Activated CD4-positive, alpha-beta T cell treated with anti-CD3 and anti-CD28 coated beads, Interleukin-2, amount 10 ng/mL, durations not matched to agents 24 days and 14 days (primary cell): ENCODE measurements at regions of chr3 and their contacts with region 1.

Region 1: DNA sequence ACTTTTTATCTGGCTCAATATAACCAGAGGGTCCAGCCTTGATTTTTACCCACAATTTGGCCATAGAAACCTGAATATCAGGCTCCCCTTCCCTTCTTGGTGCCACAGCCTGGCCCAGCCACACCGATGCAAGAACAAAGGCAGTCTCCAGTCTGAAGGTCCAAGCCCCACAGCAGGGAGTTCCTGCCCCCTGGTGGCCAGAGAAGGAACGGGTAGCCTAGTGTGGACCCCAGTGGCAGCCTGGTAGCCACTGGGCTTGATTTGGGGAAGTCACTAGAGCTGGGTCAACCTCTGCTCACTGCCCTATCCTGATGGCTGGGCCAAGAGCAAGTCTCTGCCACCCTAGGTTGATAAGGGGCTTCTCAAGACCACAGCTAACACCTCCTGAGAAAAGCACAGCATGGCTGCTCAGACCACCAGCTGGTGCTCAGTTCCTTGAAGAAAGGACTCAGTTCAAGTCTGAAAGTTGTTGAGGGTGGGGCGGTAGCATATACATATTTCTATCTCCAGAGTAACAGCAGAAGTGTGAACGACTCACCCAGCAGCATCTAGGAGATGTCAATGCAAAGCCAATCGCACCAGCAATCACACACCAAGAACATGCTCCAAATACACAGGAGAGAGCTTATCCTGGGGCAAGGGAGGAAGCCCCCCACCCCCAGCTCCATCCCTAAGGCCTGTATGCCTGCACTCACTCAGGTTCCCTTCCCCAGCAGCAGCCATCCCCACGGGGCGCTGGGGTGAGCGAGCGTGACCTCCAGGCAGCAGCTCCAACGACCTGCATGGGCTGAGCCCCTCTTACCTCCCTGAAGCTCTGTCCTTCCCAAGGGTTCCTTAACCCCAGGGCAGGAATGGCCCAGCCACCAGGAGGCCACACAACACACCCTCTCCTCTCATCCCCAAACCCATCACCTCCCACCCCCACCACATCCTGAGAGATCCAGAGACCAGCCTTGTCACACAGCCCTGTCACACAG is 7.6 kb downstream of the PFKFB4 start:
- DNase-seq: peak; percentile 95
- H3K4me3 Mint-ChIP-seq: no peak overlapping the region
- H3K27ac Mint-ChIP-seq: peak overlapping the region; percentile 37
- H3K4me1 Mint-ChIP-seq: peaks cover 24% of the 10 kb centered on the region
- H3K27me3 Mint-ChIP-seq: no peaks in the 10 kb centered on the region

Region 2: DNA sequence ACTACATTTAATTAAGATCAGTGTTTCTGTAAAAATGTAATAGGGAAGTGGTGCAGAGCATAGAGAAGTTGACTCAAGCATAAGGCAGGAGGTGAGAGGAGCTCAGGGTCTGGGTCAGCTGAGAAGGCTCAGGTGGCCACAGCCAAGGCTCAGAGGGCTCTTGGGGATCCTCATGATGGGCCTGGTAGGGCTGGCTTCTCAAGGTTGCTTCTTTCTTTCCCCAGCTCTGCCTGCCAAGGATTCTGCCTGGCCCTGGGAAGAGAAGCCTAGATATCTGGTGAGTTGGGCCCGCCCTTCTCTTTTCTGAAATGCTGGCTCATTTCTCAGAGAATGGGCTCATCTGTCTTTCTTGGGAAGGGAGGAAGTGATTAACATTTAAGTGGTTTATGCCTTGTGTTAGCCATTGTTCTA is 301.6 kb before region 1 on chr3:
- intact Hi-C with region 1: no loop called
- DNase-seq: peak; percentile 67
- H3K4me3 Mint-ChIP-seq: peak overlapping the region; percentile 45
- H3K27ac Mint-ChIP-seq: peak overlapping the region; percentile 85
- H3K4me1 Mint-ChIP-seq: peaks cover 33% of the 10 kb centered on the region
- H3K27me3 Mint-ChIP-seq: no peaks in the 10 kb centered on the region

Region 3: GRCh38 chr3:48273594-48274211 is 275.3 kb before region 1 on chr3:
- intact Hi-C with region 1: loop called (anchors 1 kb)
- DNase-seq: peak; percentile 88
- H3K4me3 Mint-ChIP-seq: no peak overlapping the region
- H3K27ac Mint-ChIP-seq: no peak overlapping the region
- H3K4me1 Mint-ChIP-seq: peaks cover 22% of the 10 kb centered on the region
- H3K27me3 Mint-ChIP-seq: no peaks in the 10 kb centered on the region

Region 4: GRCh38 chr3:48400824-48401433 is 148.1 kb before region 1 on chr3:
- intact Hi-C with region 1: loop called (anchors 1 kb)
- DNase-seq: peak; percentile 89
- H3K4me3 Mint-ChIP-seq: no peak overlapping the region
- H3K27ac Mint-ChIP-seq: peak overlapping the region; percentile 51
- H3K4me1 Mint-ChIP-seq: peaks cover 2% of the 10 kb centered on the region
- H3K27me3 Mint-ChIP-seq: peaks cover 4% of the 10 kb centered on the region

Region 5: DNA sequence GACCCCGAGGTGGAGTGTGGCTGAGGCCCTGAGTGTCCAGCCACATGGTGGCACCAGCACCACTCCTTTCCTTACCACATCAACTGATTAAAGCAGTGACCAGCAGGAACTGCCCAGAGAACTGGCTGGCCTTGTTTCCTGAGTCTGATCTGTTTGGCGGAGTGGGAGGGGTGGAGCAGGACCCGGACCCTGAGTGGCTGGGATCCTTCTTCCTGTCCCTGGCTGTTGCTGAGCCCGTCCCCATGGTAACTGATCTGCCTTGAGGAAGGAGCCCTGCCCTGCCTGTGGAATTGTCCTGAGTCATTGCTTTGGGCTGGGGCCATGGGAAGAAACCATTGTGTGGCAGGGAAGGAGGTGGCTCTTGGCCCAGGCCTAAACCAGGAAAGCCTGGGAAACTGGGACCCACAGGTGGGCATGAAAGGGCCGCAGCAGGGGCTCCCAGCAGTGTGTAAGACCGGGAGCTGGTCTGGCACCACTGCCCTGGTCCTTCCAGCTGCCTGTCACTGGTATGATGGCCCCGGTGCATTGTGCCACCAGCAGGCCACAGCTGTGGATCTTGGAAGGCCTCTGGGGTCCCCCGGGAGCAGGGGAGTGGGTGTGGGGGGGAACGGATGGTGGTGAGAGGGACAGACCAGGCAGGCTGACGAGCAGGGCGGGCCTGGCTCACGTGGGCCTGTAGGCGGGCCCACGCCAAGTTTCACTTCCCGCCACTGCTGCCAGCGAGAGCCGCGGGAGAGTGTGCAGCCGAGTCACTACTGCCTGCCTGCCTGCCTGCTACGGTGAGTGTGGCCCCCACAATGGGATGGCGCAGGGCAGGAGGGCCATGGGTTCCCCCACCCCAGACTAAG is 83.3 kb before region 1 on chr3:
- intact Hi-C with region 1: loop called (anchors 1 kb)
- DNase-seq: peak; percentile 95
- H3K4me3 Mint-ChIP-seq: peak overlapping the region; percentile 96
- H3K27ac Mint-ChIP-seq: peak overlapping the region; percentile 93
- H3K4me1 Mint-ChIP-seq: peaks cover 46% of the 10 kb centered on the region
- H3K27me3 Mint-ChIP-seq: no peaks in the 10 kb centered on the region